AG04450 (cell line): ENCODE measurements at regions of chr17 and their contacts with region 1.

Region 1: DNA sequence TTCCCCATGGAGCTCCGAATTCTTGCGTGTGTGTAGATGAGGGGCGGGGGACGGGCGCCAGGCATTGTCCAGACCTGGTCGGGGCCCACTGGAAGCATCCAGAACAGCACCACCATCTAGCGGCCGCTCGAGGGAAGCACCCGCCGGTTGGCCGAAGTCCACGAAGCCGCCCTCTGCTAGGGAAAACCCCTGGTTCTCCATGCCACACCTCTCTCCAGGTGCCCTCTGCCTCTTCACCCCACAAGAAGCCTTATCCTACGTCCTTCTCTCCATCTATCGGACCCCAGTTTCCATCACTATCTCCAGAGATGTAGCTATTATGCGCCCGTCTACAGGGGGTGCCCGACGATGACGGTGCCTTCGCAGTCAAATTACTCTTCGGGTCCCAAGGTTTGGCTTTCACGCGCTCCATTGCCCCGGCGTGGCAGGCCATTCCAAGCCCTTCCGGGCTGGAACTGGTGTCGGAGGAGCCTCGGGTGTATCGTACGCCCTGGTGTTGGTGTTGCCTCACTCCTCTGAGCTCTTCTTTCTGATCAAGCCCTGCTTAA is 617 bp upstream of the SENP3 start:
- DNase-seq: peak; percentile 61
- H3K4me3 ChIP-seq: peak overlapping the region; percentile 82
- H3K27ac ChIP-seq: peak overlapping the region; percentile 83
- H3K27me3 ChIP-seq: no peaks in the 10 kb centered on the region
- CTCF ChIP-seq: peak; percentile 83

Region 2: DNA sequence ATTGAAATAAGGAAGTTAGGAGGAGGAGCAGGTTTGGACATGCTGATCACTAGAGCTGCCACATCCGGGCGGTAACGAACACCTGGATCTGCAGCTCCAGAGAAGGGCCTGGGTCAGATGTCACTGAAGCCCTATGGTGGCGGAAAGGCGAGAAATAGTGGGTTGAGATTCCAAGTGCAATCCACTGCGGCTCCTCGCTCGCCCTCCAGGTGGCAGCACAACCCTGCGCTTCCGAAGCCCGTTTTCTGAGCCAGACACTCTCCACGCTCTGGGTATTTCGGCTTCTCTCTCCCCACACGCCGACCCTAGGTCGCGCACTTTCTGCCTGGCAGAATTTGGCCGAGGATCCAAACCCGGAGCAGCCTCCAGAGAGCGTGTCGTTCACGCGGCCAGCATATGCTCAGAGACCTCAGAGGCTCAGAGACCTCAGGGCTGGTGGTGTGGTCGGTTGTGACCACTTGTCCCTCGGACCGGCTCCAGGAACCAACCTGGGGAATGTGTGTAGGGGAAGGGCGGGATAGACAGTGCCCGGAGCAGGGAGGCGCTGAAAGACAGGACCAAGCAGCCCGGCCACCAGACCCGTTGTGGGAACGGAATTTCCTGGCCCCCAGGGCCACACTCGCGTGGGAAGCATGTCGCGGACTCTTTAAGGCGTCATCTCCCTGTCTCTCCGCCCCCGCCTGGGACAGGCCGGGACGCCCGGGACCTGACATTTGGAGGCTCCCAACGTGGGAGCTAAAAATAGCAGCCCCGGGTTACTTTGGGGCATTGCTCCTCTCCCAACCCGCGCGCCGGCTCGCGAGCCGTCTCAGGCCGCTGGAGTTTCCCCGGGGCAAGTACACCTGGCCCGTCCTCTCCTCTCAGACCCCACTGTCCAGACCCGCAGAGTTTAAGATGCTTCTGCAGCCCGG is 280.3 kb before region 1 on chr17:
- CTCF ChIA-PET with region 1: interaction called, 11 read pairs
- POLR2A ChIA-PET with region 1: no interaction called
- DNase-seq: peak; percentile 51
- H3K4me3 ChIP-seq: peak overlapping the region; percentile 51
- H3K27ac ChIP-seq: no peak overlapping the region
- H3K27me3 ChIP-seq: peaks cover 34% of the 10 kb centered on the region
- CTCF ChIP-seq: peak; percentile 96

Region 3: GRCh38 chr17:7356072-7356549 is 205.0 kb before region 1 on chr17:
- CTCF ChIA-PET with region 1: interaction called, 22 read pairs
- POLR2A ChIA-PET with region 1: no interaction called
- DNase-seq: no peak
- H3K4me3 ChIP-seq: no peak overlapping the region
- H3K27ac ChIP-seq: no peak overlapping the region
- H3K27me3 ChIP-seq: no peaks in the 10 kb centered on the region
- CTCF ChIP-seq: peak; percentile 71

Region 4: DNA sequence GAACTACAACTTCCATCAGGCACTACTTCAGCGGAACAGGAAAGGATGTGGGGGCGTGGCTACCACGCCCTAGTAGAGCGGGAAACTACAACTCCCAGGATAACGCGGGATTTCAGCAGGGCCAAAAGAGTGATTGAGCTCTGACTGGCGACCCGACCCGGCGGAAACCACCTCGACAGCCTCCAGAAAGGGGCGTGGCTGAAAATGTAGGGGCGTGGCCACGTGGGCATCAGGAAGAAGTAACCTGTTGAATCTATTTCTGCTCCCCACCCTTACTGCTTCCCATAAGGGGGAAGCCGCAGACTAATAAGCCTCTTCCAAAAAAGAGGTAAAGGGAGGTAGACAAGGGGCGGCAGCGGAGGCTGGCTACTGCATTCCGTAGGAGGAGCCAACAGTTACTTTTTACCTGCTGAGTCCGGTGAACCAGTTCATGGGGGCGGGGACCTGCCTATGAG is 125.9 kb before region 1 on chr17 and contains the start of gene TMEM102:
- CTCF ChIA-PET with region 1: interaction called, 13 read pairs
- POLR2A ChIA-PET with region 1: no interaction called
- DNase-seq: peak; percentile 78
- H3K4me3 ChIP-seq: peak within 1 kb of the TSS; percentile 45
- H3K27ac ChIP-seq: no peak within 1 kb of the TSS
- H3K27me3 ChIP-seq: peaks cover 26% of the 10 kb centered on the region
- CTCF ChIP-seq: no peak
- polyA plus RNA-seq, gene TMEM102: 1.0 and 1.1 TPM in 2 replicates

Region 5: DNA sequence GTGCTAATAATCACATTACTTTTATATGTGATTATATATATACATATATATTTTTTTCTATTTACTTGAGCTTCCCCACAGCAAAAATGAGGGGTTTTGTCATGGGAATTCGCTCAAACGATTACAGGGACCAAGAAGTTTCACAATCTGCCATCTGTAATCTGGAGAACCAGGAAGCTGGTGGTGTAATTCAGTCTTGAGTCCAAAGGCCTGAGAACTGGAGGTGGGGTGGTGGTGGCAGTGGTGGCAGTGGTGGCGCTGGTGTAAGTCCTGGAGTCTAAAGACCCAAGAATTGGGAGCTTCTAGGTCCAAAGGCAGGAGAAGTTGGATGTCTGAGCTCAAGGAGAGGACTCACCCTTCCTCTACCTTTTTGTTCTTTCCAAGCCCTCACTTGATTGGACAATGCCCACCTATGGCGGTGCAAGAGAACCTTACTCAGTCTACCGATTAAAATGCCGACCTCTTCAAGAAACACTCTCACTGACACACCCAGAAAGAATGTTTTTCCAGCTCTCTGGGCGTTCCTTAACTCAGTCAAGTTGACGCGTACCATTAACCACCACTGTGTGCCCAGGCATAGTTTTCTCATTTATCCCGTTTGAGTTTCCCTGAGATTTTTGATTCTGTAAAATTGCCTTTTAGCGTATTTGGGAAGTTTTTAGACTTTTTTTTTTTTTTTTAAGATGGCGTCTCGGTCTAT is 45.0 kb before region 1 on chr17:
- CTCF ChIA-PET with region 1: interaction called, 116 read pairs
- POLR2A ChIA-PET with region 1: interaction called, 7 read pairs
- DNase-seq: no peak
- H3K4me3 ChIP-seq: no peak overlapping the region
- H3K27ac ChIP-seq: no peak overlapping the region
- H3K27me3 ChIP-seq: no peaks in the 10 kb centered on the region
- CTCF ChIP-seq: no peak

Region 6: GRCh38 chr17:7548585-7549400 is 12.3 kb before region 1 on chr17 and contains the start of gene TNFSF12:
- CTCF ChIA-PET with region 1: interaction called, 17 read pairs
- POLR2A ChIA-PET with region 1: no interaction called
- DNase-seq: no peak
- H3K4me3 ChIP-seq: peak within 1 kb of the TSS; percentile 70
- H3K27ac ChIP-seq: peak within 1 kb of the TSS; percentile 21
- H3K27me3 ChIP-seq: no peaks in the 10 kb centered on the region
- CTCF ChIP-seq: no peak
- polyA plus RNA-seq, gene TNFSF12: 26.0 and 27.1 TPM in 2 replicates

Region 7: GRCh38 chr17:7589204-7589868 is 28.2 kb after region 1 on chr17:
- CTCF ChIA-PET with region 1: interaction called, 14 read pairs
- POLR2A ChIA-PET with region 1: interaction called, 3 read pairs
- DNase-seq: no peak
- H3K4me3 ChIP-seq: peak overlapping the region; percentile 34
- H3K27ac ChIP-seq: peak overlapping the region; percentile 94
- H3K27me3 ChIP-seq: no peaks in the 10 kb centered on the region
- CTCF ChIP-seq: peak; percentile 87

Region 8: DNA sequence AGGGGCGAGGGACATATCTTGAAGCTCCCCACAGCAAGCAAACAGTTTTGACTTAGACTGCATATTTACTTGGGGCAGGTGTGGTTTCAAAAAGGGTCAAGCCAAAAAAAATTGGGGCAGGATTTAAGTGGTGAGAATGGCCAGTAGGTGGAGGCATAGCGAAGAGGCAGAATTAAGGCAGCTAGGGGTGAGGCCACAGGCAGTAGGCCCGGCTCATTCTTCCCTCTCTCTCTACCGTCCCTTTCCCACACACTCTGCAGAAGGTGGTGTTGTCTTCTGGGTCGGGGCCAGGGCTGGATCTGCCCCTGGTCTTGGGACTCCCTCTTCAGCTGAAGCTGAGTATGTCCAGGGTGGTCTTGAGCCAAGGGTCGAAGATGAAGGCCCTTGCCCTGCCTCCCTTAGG is 71.4 kb after region 1 on chr17:
- CTCF ChIA-PET with region 1: no interaction called
- POLR2A ChIA-PET with region 1: no interaction called
- DNase-seq: no peak
- H3K4me3 ChIP-seq: no peak overlapping the region
- H3K27ac ChIP-seq: no peak overlapping the region
- H3K27me3 ChIP-seq: no peaks in the 10 kb centered on the region
- CTCF ChIP-seq: peak; percentile 68